Vagina (tissue), 2 donors: ENCODE measurements at regions of chr14 and their contacts with region 1.

Region 1: GRCh38 chr14:55051426-55052268 is at the start of gene MAPK1IP1L:
- DNase-seq: peak in 1 of 2 donors; percentile 97
- H3K4me3 ChIP-seq: peak within 1 kb of the TSS; percentile 85 to 97
- H3K27ac ChIP-seq: peak within 1 kb of the TSS; percentile 99
- H3K4me1 ChIP-seq: peaks cover 51% of the 10 kb centered on the region
- H3K27me3 ChIP-seq: no peaks in the 10 kb centered on the region
- CTCF ChIP-seq: peak; percentile 96 to 100 (median 98)
- POLR2A ChIP-seq: peak in 1 of 2 donors; percentile 99
- total RNA-seq, gene MAPK1IP1L: 39.3 TPM

Region 2: DNA sequence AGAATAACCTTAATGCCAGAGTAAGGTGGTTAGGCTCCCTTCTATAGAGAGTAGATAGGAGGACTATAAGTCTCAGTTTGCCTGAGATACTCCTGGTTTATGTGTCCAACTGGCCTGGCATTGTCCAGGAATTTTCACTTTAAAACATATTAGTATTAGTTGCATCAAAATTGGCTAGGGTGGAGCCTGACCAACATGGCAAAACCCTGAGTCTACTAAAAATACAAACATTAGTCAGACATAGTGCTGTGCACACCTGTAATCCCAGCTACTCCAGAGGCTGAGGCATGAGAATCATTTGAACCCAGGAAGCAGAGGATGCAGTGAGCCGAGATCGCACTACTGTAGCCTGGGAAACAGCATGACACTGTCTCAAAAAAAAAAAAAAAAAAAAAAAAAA is 36.6 kb before region 1 on chr14:
- intact Hi-C with region 1: loop called (anchors 1 kb)
- DNase-seq: no peak
- H3K4me3 ChIP-seq: no peak overlapping the region
- H3K27ac ChIP-seq: no peak overlapping the region
- H3K4me1 ChIP-seq: no peaks in the 10 kb centered on the region
- H3K27me3 ChIP-seq: no peaks in the 10 kb centered on the region
- CTCF ChIP-seq: no peak
- POLR2A ChIP-seq: no peak

Region 3: GRCh38 chr14:55129428-55130195 is 78.0 kb after region 1 on chr14:
- intact Hi-C with region 1: loop called (anchors 10 kb)
- DNase-seq: peak in 1 of 2 donors; percentile 91
- H3K4me3 ChIP-seq: peak overlapping the region; percentile 56 to 94
- H3K27ac ChIP-seq: peak overlapping the region; percentile 99
- H3K4me1 ChIP-seq: peaks cover 84% of the 10 kb centered on the region
- H3K27me3 ChIP-seq: no peaks in the 10 kb centered on the region
- CTCF ChIP-seq: no peak
- POLR2A ChIP-seq: no peak